Left colon (tissue), 2 donors: ENCODE measurements at regions of chr16 and their contacts with region 1.

Region 1: GRCh38 chr16:23052908-23053580 is 96.2 kb downstream of the USP31 start:
- DNase-seq: no peak
- ATAC-seq: no peak

Region 2: DNA sequence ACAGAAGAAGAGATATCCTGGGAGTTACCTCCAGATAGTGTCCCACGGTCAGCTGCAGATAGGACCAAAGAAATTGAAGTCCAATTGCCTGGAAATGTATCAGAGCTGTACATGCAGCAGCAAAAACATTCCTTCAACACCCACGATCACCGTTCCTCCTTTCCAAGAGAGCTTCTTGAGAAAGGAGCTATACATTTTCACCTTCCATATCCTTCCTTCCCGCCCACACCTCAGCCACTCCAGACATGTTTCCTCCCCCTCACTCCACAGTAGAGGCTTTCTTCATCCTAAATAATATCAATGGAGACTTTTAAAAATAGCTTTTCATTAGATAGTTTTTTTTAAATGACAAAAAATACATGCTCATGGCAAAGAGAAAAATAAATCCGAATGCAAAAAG is 151.5 kb before region 1 on chr16:
- intact Hi-C with region 1: loop called in 1 of 2 experiments (anchors 10 kb)
- DNase-seq: no peak
- ATAC-seq: no peak

Region 3: DNA sequence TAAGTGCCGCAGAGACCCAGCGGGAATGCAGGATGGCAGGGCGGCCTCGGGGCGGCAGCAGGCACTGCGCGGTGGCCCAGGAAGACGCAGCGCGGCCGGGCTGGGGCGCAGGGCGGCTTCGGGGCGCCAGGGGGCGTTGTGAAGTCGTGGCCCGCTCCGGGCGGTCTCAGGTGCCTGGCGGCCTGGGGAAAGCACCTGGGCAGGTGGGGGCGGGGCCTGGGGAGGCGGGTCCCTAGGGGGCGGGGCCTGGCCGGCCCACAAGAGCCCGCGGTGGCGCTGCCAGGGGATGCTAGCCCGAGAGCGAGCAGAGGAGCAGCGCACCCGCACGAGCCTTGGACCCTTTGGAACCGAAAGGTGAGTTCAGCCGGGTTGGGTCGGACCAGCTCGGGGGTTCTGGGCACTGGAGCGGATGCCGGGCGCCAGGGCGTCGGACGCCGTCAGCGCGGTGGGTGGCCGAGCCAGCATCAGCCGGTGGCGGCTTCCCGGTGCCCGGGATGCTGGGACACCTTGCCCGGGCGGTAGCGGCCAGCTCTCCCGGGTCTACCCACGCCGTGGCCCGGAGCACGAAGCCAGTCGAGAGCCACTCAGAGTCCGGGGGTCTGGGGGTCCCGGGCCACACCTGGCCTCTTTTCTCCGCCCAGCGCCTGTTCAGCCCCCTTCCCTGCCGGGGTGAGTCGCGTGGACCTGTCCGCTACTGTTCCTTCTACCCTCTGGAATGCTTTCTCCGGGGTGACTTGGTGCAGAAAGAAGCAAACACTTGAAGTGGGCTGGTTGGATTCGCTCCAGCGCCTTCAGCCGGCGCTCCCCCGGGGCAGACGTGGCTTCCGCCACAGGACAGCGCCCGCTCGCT is 129.6 kb after region 1 on chr16 and contains the start of gene SCNN1G:
- intact Hi-C with region 1: no loop called
- DNase-seq: peak; percentile 79 to 91
- ATAC-seq: peak; percentile 98
- total RNA-seq, gene SCNN1G: 4.9 to 90.3 TPM

Region 4: GRCh38 chr16:23527961-23528643 is 475.1 kb after region 1 on chr16:
- intact Hi-C with region 1: no loop called
- DNase-seq: no peak
- ATAC-seq: no peak